IMR-90 (cell line): ENCODE measurements at regions of chr2 and their contacts with region 1.

Region 1: DNA sequence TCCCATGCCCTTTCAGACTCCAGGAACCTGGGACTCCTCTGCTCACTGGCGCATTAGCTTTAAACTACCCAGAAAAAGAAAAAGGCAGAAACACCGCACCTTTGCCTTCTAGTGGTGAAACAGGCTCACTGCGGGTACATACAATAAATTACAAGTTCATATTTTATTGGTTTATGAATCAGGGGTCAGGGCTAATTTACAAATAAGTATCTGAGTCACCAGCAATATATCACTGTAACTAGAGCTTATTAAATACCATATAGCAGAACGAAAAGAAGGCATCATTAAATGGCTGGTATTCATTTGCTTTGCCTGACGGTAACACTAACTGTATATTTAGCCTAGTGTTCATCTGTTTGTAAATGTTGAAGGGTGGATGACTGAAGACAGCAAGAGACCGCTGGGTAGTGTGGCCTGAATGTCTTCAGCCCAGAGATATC is 26.9 kb upstream of the DTNB start:
- DNase-seq: peak; percentile 59
- ATAC-seq: peak; percentile 81
- H3K4me3 ChIP-seq: no peak overlapping the region
- H3K27ac ChIP-seq: no peak overlapping the region
- H3K4me1 ChIP-seq: no peaks in the 10 kb centered on the region
- H3K27me3 ChIP-seq: peaks cover 14% of the 10 kb centered on the region
- CTCF ChIP-seq: peak; percentile 66
- POLR2A ChIP-seq: no peak
- RAD21 ChIP-seq: peak; percentile 54

Region 2: DNA sequence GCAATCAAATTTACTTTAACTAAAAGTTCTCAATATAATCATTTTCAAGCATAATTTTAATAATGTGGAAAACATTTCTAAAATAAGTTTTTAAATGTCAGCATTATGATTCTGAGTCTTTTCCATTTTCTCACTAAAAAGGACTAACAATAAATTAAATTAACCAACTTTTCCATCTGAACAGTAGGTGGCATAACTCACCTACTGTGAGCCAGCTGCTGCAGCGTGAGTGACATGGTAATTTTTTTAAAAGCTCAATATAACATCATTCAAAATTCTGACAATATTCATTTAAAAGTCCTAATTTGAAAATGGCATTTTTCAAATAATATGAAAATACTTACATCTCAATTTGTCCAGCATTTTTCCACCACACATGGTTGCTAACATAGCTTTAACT is 93.3 kb before region 1 on chr2:
- CTCF ChIA-PET with region 1: interaction called, 9 read pairs
- POLR2A ChIA-PET with region 1: no interaction called
- dilution Hi-C with region 1: no loop called
- in situ Hi-C with region 1: no loop called
- intact Hi-C with region 1: loop called (anchors 1 kb)
- DNase-seq: peak; percentile 41
- ATAC-seq: no peak
- H3K4me3 ChIP-seq: no peak overlapping the region
- H3K27ac ChIP-seq: no peak overlapping the region
- H3K4me1 ChIP-seq: no peaks in the 10 kb centered on the region
- H3K27me3 ChIP-seq: no peaks in the 10 kb centered on the region
- CTCF ChIP-seq: peak; percentile 75
- POLR2A ChIP-seq: no peak
- RAD21 ChIP-seq: peak; percentile 86

Region 3: GRCh38 chr2:25960920-25961319 is 260.7 kb after region 1 on chr2:
- CTCF ChIA-PET with region 1: no interaction called
- POLR2A ChIA-PET with region 1: no interaction called
- dilution Hi-C with region 1: no loop called
- in situ Hi-C with region 1: no loop called
- intact Hi-C with region 1: no loop called
- DNase-seq: peak; percentile 63
- ATAC-seq: peak; percentile 14; the same call in 1 of the 2 replicates
- H3K4me3 ChIP-seq: no peak overlapping the region
- H3K27ac ChIP-seq: no peak overlapping the region
- H3K4me1 ChIP-seq: peaks cover 2% of the 10 kb centered on the region
- H3K27me3 ChIP-seq: no peaks in the 10 kb centered on the region
- CTCF ChIP-seq: no peak
- POLR2A ChIP-seq: no peak
- RAD21 ChIP-seq: no peak